Activated CD8-positive, alpha-beta memory T cell treated with anti-CD3 and anti-CD28 coated beads, Interleukin-2, amount 10 ng/mL, durations not matched to agents 7 days and 5 days (primary cell): ENCODE measurements at regions of chr11 and their contacts with region 1.

Region 1: GRCh38 chr11:75241036-75241905 is 697 bp downstream of the TPBGL start:
- DNase-seq: peak; percentile 88
- ATAC-seq: peak; percentile 97
- H3K4me3 Mint-ChIP-seq: peak overlapping the region; percentile 63
- H3K27ac Mint-ChIP-seq: no peak overlapping the region
- H3K4me1 Mint-ChIP-seq: peaks cover 9% of the 10 kb centered on the region
- H3K27me3 Mint-ChIP-seq: peaks cover 71% of the 10 kb centered on the region

Region 2: DNA sequence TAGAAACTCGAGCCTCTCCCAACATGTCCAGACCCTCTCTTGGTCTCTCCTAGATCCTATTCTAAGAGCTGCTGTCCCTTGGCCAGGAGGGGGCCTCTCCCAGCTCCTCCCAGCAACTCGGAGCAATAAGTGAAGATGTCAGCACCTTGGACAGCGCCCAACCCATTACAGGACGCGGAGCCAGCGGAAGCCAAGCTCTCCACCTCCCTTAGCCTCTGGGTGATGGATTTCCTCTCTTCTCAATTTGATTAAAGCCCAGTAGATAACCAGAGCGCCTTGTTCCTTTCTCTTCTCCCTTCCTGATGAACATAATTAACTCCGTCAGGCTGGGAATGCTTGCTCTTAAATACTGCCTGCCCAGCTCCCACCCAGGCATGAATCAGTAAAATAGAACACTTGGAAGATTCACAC is 26.9 kb before region 1 on chr11:
- CTCF ChIA-PET with region 1: interaction called, 24 read pairs
- DNase-seq: peak; percentile 88
- ATAC-seq: peak; percentile 85
- H3K4me3 Mint-ChIP-seq: no peak overlapping the region
- H3K27ac Mint-ChIP-seq: no peak overlapping the region
- H3K4me1 Mint-ChIP-seq: peaks cover 3% of the 10 kb centered on the region
- H3K27me3 Mint-ChIP-seq: peaks cover 37% of the 10 kb centered on the region

Region 3: GRCh38 chr11:75337195-75337654 is 96.0 kb after region 1 on chr11:
- CTCF ChIA-PET with region 1: no interaction called
- DNase-seq: no peak
- ATAC-seq: no peak
- H3K4me3 Mint-ChIP-seq: no peak overlapping the region
- H3K27ac Mint-ChIP-seq: no peak overlapping the region
- H3K4me1 Mint-ChIP-seq: peaks cover 52% of the 10 kb centered on the region
- H3K27me3 Mint-ChIP-seq: no peaks in the 10 kb centered on the region

Region 4: GRCh38 chr11:75603791-75604736 is 362.8 kb after region 1 on chr11:
- CTCF ChIA-PET with region 1: no interaction called
- DNase-seq: no peak
- ATAC-seq: no peak
- H3K4me3 Mint-ChIP-seq: no peak overlapping the region
- H3K27ac Mint-ChIP-seq: no peak overlapping the region
- H3K4me1 Mint-ChIP-seq: peaks cover 4% of the 10 kb centered on the region
- H3K27me3 Mint-ChIP-seq: peaks cover 53% of the 10 kb centered on the region